ENCODE measurements at regions of chr3 and their contacts with region 1.

Region 1: DNA sequence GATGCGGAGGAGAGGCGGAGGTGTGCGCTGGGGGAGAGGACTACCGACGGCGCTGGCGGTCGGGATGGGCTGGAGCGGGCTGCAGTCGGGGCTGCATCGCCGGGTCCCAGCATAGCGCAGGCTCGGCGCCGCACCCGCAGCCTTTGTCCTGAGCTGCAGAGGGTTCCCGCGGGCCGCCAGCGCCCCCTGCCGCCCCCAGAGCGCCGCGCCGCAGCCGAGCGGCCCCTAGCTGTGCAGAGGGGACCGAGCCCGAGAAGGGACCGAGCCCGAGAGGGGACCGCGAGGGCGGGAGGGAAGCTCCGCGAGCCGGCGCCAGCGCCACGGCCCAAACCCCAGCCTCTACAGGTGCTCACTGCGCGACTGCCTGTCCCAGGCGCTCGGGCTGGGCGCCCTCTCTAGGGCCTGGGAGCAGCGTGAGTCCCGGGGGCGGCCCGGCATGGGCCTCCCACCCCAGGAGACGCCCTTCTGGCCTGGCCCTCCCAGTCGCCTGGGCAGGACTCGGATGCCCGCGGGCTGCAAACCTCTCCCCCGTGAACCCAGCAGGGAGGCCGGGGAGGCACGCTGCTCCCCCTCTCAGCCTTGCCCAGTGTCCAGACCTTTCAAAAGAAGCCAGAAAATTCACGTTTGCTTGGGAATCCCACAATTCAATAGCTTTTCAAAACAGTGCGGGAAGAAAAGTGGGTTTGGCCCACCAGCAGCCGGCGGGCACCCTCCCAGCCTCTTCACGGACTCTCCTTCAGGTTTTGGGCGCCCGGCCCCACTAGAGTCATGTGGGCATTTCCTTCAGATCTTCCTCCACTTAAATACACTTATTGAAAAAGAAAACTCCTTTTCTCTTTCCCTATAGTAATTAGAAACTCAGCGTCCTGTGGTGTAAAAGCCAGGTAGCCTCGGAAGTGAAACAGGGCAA is 134.7 kb downstream of the TPRA1 start:
- DNase-seq: peak; percentile 41 to 94 (median 76)
- ATAC-seq: peak; percentile 93 to 97 (median 94)
- H3K4me3 ChIP-seq: peak overlapping the region in 1 of 4 donors; percentile 38
- H3K27ac ChIP-seq: no peak overlapping the region
- H3K4me1 ChIP-seq: peaks cover 0 to 5% (median 0%) of the 10 kb centered on the region in 3 donors
- H3K27me3 ChIP-seq: peaks cover 0 to 19% (median 5%) of the 10 kb centered on the region in 4 donors
- CTCF ChIP-seq: peak; percentile 91 to 97 (median 96)

Region 2: GRCh38 chr3:126522363-126522788 is 933.4 kb before region 1 on chr3:
- intact Hi-C with region 1: loop called in 1 of 3 experiments (anchors 10 kb)
- DNase-seq: peak; percentile 25 to 81 (median 59)
- ATAC-seq: peak; percentile 46 to 72 (median 69)
- H3K4me3 ChIP-seq: no peak overlapping the region
- H3K27ac ChIP-seq: no peak overlapping the region
- H3K4me1 ChIP-seq: peaks cover 0 to 4% (median 0%) of the 10 kb centered on the region in 3 donors
- H3K27me3 ChIP-seq: no peaks in the 10 kb centered on the region
- CTCF ChIP-seq: peak; percentile 84 to 93 (median 92)

Region 3: DNA sequence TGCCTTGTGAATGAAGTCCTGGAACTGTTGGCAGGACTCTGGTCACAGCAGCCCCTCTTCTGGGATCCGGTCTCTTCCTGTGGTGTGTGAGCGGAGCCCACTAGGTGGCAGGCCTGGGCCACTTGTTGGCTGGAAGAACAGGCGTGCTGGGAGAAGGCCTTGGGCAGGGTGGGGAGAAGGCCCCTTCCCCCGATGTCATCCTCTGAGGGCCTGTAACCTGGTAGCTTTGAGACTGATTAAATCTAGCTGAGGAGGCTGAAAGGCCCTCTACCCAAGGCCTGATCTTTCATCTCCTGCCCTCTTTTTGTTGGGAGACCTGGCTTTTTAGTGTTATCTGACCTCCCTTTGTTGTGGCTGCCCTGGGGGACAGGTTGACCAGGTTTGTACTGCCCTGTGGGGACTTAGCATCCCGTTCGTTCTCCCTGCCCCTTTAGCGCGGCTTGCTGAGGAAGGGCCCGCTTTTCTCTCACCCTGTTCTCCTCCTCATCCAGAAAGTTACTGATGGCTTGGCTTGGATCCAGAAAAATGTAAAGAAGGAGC is 703.4 kb before region 1 on chr3:
- intact Hi-C with region 1: loop called in 1 of 3 experiments (anchors 10 kb)
- DNase-seq: peak; percentile 45 to 86 (median 72)
- ATAC-seq: peak; percentile 69 to 98 (median 94)
- H3K4me3 ChIP-seq: no peak overlapping the region
- H3K27ac ChIP-seq: no peak overlapping the region
- H3K4me1 ChIP-seq: no peaks in the 10 kb centered on the region
- H3K27me3 ChIP-seq: no peaks in the 10 kb centered on the region
- CTCF ChIP-seq: peak; percentile 52 to 75 (median 64)

Region 4: GRCh38 chr3:126971891-126972351 is 483.9 kb before region 1 on chr3:
- intact Hi-C with region 1: loop called in 1 of 3 experiments (anchors 10 kb)
- DNase-seq: peak in 2 of 6 donors; percentile 49 to 75
- ATAC-seq: peak in 3 of 4 donors; percentile 41 to 89 (median 88)
- H3K4me3 ChIP-seq: no peak overlapping the region
- H3K27ac ChIP-seq: peak overlapping the region in 1 of 4 donors; percentile 55
- H3K4me1 ChIP-seq: no peaks in the 10 kb centered on the region
- H3K27me3 ChIP-seq: no peaks in the 10 kb centered on the region
- CTCF ChIP-seq: no peak

Region 5: DNA sequence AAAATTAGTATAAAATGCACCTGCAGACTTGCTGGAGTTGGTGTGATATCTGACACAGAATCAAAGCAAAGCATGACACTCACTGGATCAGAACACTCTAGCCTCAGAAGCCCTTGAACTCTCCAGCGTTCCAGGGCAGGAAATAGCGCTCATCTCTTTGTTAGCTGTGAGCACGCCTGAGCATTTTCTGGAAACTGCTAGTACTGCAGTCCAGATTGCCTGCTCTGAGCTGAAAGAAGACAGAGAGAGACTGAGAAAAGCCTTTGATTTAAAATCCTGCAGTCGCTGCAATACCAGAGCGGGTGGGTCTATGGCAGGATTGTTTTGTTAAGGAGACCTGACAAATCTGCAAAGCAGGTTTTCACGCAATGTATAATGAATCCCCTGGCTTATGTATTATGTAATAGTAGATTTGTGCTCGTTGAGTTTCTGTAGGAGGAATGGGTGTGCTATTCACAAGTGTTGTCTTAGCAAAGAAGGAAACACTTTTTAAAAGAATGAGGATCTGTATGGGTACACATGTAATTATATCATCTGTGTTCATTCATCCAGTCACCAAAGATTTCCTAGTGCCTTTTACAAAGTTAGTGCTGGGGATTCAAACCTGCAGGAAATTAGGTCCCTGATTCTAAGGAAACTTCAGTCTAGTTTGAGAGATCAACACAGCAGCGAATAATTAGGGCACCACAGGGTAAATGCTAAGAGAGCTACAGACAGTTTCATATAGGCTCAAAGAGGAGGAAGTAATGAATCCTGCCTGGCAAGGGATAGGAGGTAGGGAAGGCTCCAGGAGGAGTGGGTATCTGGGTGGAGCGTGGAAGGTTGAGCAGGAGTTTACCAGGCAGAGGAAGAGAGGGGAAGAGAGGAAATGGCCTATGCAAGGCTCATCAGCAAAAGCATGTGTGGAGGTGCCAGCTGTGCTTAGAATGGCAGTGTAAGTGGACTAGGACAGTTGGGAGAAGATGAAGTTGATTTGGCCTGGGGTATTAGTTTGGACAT is 392.6 kb after region 1 on chr3:
- intact Hi-C with region 1: no loop called
- DNase-seq: no peak
- ATAC-seq: no peak
- H3K4me3 ChIP-seq: no peak overlapping the region
- H3K27ac ChIP-seq: no peak overlapping the region
- H3K4me1 ChIP-seq: no peaks in the 10 kb centered on the region
- H3K27me3 ChIP-seq: no peaks in the 10 kb centered on the region
- CTCF ChIP-seq: no peak